WTC11 (cell line): ENCODE measurements at regions of chr6 and their contacts with region 1.

Region 1: DNA sequence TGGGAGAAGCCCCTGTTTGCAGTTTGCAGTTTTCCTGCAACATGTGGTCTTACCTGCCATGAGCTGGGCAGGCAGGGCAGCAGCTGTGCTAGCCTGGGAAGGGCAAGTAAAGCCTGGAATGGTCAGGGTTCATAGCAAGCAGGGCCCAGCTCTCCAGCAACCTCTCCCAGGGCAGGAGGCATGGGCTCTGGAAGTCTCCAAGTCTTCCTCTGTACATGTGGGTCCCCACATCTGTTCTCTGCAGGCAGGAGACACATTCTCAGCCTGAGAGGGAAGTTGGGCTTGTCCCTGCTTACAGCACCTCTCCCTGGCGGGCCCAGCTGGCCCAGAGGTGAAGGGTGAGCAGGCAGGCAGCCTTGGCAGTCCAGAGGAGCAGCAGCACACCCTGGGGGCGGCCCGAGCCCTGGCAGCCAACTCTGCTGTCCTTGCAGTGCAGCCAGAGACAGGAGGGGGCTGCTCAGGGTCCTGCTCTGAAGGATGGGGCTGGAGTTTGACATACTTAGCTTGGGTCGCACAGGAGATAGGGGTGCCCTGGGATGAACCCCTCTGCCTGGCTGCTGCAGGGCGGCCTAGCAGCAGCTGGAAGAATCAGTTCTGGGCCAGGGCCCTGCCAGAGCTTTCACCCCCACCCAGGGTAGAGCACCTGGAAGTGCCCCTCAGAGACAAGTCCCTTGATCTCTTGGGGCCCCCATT is 176.0 kb downstream of the MRPL14 start:
- DNase-seq: peak; percentile 90
- ATAC-seq: peak; percentile 95
- H3K4me3 Mint-ChIP-seq: no peak overlapping the region
- H3K27ac Mint-ChIP-seq: no peak overlapping the region
- H3K4me1 Mint-ChIP-seq: peaks cover 4% of the 10 kb centered on the region
- H3K27me3 Mint-ChIP-seq: no peaks in the 10 kb centered on the region
- CTCF ChIP-seq: no peak; the same call in none of the 2 replicates

Region 2: DNA sequence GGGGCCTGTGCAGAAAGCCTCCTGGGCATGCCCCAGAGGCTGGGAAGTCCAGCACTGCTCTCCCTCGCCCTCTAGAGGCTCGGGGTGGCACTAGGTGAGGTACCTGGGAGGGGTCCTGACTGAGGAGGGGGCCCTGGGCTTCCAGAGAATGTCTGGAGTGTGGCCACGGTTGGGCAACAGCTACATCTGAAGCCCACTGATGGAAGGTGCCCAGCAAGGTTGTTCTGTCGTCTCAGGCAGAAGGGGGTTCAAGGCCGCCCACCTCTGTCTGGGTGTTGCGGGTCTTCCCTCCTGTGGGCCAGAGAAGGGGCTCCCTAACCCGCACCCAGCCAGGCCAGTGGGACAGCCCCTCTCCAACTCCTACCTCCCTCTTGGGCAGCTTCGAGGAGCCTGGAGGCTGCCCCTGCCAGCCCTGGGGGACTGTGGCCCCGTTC is 192.6 kb before region 1 on chr6:
- CTCF ChIA-PET with region 1: interaction called, 11 read pairs
- POLR2A ChIA-PET with region 1: no interaction called
- DNase-seq: peak; percentile 90
- ATAC-seq: peak; percentile 97
- H3K4me3 Mint-ChIP-seq: no peak overlapping the region
- H3K27ac Mint-ChIP-seq: no peak overlapping the region
- H3K4me1 Mint-ChIP-seq: peaks cover 21% of the 10 kb centered on the region
- H3K27me3 Mint-ChIP-seq: no peaks in the 10 kb centered on the region; the same call in 1 of the 2 replicates
- CTCF ChIP-seq: peak; percentile 63

Region 3: GRCh38 chr6:43856005-43856765 is 95.0 kb before region 1 on chr6:
- CTCF ChIA-PET with region 1: interaction called, 17 read pairs
- POLR2A ChIA-PET with region 1: no interaction called
- DNase-seq: peak; percentile 36
- ATAC-seq: peak; percentile 61
- H3K4me3 Mint-ChIP-seq: no peak overlapping the region
- H3K27ac Mint-ChIP-seq: no peak overlapping the region
- H3K4me1 Mint-ChIP-seq: peaks cover 13% of the 10 kb centered on the region
- H3K27me3 Mint-ChIP-seq: no peaks in the 10 kb centered on the region
- CTCF ChIP-seq: no peak

Region 4: GRCh38 chr6:43937236-43938164 is 13.7 kb before region 1 on chr6:
- CTCF ChIA-PET with region 1: interaction called, 23 read pairs
- POLR2A ChIA-PET with region 1: no interaction called
- DNase-seq: no peak
- ATAC-seq: peak; percentile 32; the same call in 1 of the 2 replicates
- H3K4me3 Mint-ChIP-seq: no peak overlapping the region
- H3K27ac Mint-ChIP-seq: peak overlapping the region; percentile 14; the same call in 1 of the 2 replicates
- H3K4me1 Mint-ChIP-seq: peaks cover 14% of the 10 kb centered on the region
- H3K27me3 Mint-ChIP-seq: no peaks in the 10 kb centered on the region
- CTCF ChIP-seq: no peak

Region 5: DNA sequence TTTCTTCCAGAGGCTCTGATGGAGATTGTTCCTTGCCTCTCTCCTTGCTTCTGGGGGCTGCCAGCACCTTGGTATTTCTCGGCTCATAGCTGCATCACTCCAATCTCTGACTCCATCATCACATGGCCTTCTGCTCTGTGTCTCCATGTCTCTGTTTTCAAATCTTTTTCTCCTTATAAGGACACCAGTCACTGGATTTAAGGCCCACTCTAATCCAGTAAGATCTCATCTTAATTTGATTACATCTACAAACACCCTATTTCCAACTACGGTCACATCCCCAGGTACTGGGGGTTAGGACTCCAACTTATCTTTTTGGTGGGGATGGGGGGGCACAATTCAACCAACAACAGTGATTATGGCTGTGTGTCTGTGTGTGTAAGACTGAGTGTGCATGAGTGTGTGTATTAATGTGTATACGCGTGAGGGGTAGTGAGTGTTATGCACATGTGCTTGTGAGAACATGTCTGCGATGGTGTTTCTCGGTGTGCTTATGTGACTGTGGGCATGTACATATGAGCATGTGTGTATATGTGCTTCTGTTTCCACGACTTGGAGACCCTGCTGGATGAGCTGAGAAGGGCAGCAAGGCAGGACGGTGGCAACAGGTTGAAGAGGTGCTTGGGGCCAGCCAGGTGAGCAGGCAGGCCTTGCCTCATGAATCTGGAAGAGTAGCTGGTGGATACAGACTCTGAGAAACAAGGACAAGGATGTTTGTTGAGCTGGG is 45.6 kb after region 1 on chr6:
- CTCF ChIA-PET with region 1: interaction called, 15 read pairs
- POLR2A ChIA-PET with region 1: interaction called, 6 read pairs
- DNase-seq: no peak
- ATAC-seq: no peak
- H3K4me3 Mint-ChIP-seq: no peak overlapping the region
- H3K27ac Mint-ChIP-seq: 0 out of 2 replicates have a peak overlapping the region, but pooled peaks have one; percentile 2
- H3K4me1 Mint-ChIP-seq: peaks cover 35% of the 10 kb centered on the region
- H3K27me3 Mint-ChIP-seq: peaks cover 6% of the 10 kb centered on the region; the same call in 1 of the 2 replicates
- CTCF ChIP-seq: no peak